ENCODE measurements at regions of chr22 and their contacts with region 1.

Region 1: GRCh38 chr22:17876306-17876831 is 102.1 kb upstream of the BID start:
- DNase-seq: no peak
- H3K4me3 ChIP-seq: no peak overlapping the region
- H3K27ac ChIP-seq: no peak overlapping the region
- H3K4me1 ChIP-seq: no peaks in the 10 kb centered on the region
- H3K27me3 ChIP-seq: no peaks in the 10 kb centered on the region
- CTCF ChIP-seq: no peak
- POLR2A ChIP-seq: no peak

Region 2: GRCh38 chr22:16568460-16568758 is 1308.0 kb before region 1 on chr22:
- intact Hi-C with region 1: no loop called
- DNase-seq: no peak
- H3K4me3 ChIP-seq: no peak overlapping the region
- H3K27ac ChIP-seq: no peak overlapping the region
- H3K4me1 ChIP-seq: no peaks in the 10 kb centered on the region
- H3K27me3 ChIP-seq: no peaks in the 10 kb centered on the region
- CTCF ChIP-seq: no peak
- POLR2A ChIP-seq: no peak

Region 3: GRCh38 chr22:17855572-17856290 is 20.6 kb before region 1 on chr22:
- intact Hi-C with region 1: loop called (anchors 1 kb)
- DNase-seq: no peak
- H3K4me3 ChIP-seq: no peak overlapping the region
- H3K27ac ChIP-seq: no peak overlapping the region
- H3K4me1 ChIP-seq: peaks cover 0 to 11% of the 10 kb centered on the region in 2 donors
- H3K27me3 ChIP-seq: no peaks in the 10 kb centered on the region
- CTCF ChIP-seq: no peak
- POLR2A ChIP-seq: no peak

Region 4: GRCh38 chr22:17862646-17863181 is 13.7 kb before region 1 on chr22:
- intact Hi-C with region 1: loop called (anchors 1 kb)
- DNase-seq: no peak
- H3K4me3 ChIP-seq: no peak overlapping the region
- H3K27ac ChIP-seq: no peak overlapping the region
- H3K4me1 ChIP-seq: peaks cover 0 to 11% of the 10 kb centered on the region in 2 donors
- H3K27me3 ChIP-seq: no peaks in the 10 kb centered on the region
- CTCF ChIP-seq: no peak
- POLR2A ChIP-seq: no peak